PC-3 (cell line): ENCODE measurements at regions of chr20 and their contacts with region 1.

Region 1: DNA sequence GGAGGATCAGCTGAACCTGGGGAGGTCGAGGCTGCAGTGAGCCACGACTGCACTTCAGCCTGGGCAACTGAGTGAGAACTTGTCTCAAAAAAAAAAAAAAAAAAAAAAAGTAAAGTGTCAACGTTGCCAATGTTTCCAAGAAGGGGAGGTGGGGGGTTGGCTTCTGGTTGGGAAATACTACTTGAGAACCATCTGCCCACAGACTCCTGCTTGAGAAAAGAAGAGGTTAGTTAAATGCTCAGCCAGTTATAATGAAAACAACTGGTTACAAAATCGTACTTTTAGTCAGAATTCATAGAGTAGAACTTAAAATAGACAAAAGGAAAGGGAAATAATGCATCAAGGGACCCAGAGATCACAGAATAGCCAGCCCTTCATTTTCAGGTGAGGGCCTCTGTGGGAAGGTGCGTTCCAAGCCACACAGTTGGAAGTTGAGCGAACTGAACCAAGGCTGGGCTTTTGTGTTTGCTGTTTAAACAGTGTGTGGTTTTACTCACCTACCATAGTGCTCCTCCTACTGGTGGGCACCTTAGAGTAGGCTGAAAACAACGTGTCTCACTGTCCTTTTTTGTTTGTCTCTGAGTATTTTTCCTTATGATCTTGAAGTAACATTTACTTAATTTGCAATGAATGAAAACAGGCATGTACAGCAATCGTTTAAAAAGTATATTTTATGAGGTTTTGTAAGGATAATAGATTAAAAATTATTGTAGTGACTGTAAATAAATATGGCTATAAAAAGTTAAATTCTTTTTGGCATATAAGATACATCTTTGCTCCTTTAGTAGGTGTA is 200.7 kb downstream of the BCAS1 start:
- DNase-seq: peak; percentile 98
- ATAC-seq: peak; percentile 71
- H3K4me3 ChIP-seq: peak overlapping the region; percentile 3; the same call in 1 of the 2 replicates
- H3K27ac ChIP-seq: peak overlapping the region; percentile 87
- H3K4me1 ChIP-seq: peaks cover 73% of the 10 kb centered on the region
- H3K27me3 ChIP-seq: no peaks in the 10 kb centered on the region
- CTCF ChIP-seq: peak; percentile 99

Region 2: GRCh38 chr20:53578492-53579222 is 291.0 kb before region 1 on chr20:
- CTCF ChIA-PET with region 1: no interaction called
- POLR2A ChIA-PET with region 1: no interaction called
- intact Hi-C with region 1: loop called (anchors 2 kb)
- DNase-seq: peak; percentile 100
- ATAC-seq: peak; percentile 12
- H3K4me3 ChIP-seq: peak overlapping the region; percentile 75
- H3K27ac ChIP-seq: peak overlapping the region; percentile 88
- H3K4me1 ChIP-seq: peaks cover 59% of the 10 kb centered on the region
- H3K27me3 ChIP-seq: no peaks in the 10 kb centered on the region
- CTCF ChIP-seq: peak; percentile 99

Region 3: DNA sequence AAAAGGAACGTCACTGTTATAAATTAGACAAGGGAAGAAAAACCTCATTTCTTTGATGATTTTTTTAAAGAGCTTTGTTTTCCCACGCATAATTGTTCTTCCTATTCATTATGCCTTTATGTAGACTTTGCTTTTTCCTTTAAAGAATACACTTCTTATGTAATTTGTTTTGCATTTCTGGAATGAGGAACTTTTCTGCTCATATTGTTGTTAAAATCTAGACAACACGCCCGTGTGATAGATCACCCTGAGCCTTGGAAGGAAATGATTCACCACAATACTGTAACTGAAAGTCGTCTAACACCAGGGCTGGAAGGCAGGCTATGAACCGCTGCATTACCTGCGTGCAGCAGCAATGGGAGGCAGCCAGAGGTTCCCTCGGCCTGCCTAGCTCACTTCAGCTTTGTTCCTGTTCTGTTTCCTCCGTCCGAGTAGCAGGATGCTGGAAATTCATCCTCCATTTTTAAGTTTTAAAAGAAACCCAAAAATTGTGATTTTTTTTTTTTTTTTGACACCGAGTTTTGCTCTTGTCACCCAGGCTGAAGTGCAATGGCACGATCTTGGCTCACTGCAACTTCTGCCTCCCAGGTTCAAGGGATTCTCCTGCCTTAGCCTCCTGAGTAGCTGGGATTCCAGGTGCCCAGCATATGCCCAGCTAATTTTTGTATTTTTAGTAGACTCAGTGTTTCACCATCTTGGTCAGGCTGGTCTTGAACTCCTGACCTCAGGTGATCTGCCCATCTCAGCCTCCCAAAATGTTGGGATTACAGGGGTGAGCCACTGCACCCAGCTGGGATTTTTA is 226.4 kb before region 1 on chr20:
- CTCF ChIA-PET with region 1: interaction called, 5 read pairs
- POLR2A ChIA-PET with region 1: no interaction called
- intact Hi-C with region 1: loop called (anchors 1 kb)
- DNase-seq: peak; percentile 94
- ATAC-seq: peak; percentile 92
- H3K4me3 ChIP-seq: peak overlapping the region; percentile 51
- H3K27ac ChIP-seq: peak overlapping the region; percentile 80
- H3K4me1 ChIP-seq: peaks cover 32% of the 10 kb centered on the region
- H3K27me3 ChIP-seq: no peaks in the 10 kb centered on the region
- CTCF ChIP-seq: no peak

Region 4: GRCh38 chr20:53786445-53787267 is 83.0 kb before region 1 on chr20:
- CTCF ChIA-PET with region 1: interaction called, 4 read pairs
- POLR2A ChIA-PET with region 1: interaction called, 15 read pairs
- intact Hi-C with region 1: loop called (anchors 1 kb)
- DNase-seq: peak; percentile 71
- ATAC-seq: peak; percentile 46
- H3K4me3 ChIP-seq: peak overlapping the region; percentile 27
- H3K27ac ChIP-seq: peak overlapping the region; percentile 87
- H3K4me1 ChIP-seq: peaks cover 58% of the 10 kb centered on the region
- H3K27me3 ChIP-seq: no peaks in the 10 kb centered on the region
- CTCF ChIP-seq: peak; percentile 39

Region 5: DNA sequence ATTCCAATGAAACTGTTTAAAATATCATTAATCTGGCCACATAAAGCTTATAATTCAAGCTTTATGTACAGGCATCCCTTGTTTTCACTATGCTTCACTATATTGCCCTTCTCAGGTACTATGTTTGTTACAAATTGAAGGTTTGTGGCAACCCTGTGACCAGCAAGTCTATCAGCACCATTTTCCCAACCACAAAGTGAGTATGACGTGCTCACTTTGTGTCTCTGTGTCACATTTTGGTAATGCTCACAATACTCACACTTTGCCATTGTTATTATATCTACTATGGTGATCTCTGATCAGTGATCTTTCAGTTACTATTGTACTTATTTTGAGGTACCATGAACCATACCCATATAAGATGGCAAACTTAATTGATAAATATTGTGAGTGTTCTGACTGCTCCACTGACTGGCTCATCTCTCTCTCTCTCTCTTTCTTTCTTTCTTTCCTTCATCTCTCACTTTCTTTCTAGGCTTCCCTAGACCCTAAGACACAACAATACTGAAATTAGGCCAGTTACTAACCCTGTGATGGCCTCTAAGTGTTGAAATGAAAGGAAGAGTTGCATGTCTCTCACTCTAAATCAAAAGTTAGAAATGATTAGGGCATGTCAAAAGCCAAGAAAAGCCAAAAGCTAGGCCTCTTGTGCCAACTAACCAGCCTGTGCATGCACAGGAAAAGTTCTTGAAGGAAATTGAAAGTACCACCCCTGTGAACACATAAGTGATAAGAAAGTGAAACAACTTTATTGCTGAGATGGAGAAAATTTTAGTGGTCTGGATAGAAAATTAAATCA is 27.2 kb before region 1 on chr20:
- CTCF ChIA-PET with region 1: no interaction called
- POLR2A ChIA-PET with region 1: interaction called, 3 read pairs
- intact Hi-C with region 1: loop called (anchors 2 kb)
- DNase-seq: no peak
- ATAC-seq: no peak
- H3K4me3 ChIP-seq: no peak overlapping the region
- H3K27ac ChIP-seq: no peak overlapping the region
- H3K4me1 ChIP-seq: peaks cover 38% of the 10 kb centered on the region
- H3K27me3 ChIP-seq: no peaks in the 10 kb centered on the region
- CTCF ChIP-seq: no peak